CD8-positive, alpha-beta T cell (primary cell): ENCODE measurements at regions of chr3 and their contacts with region 1.

Region 1: GRCh38 chr3:11271986-11272904 is at the start of gene ATG7:
- DNase-seq: peak; percentile 94 to 98 (median 97)
- ATAC-seq: peak; percentile 98
- H3K4me3 ChIP-seq: peak within 1 kb of the TSS; percentile 77 to 96
- H3K4me3 Mint-ChIP-seq: peak within 1 kb of the TSS; percentile 96
- H3K27ac ChIP-seq: peak within 1 kb of the TSS; percentile 94 to 97
- H3K27ac Mint-ChIP-seq: peak within 1 kb of the TSS; percentile 99
- H3K4me1 ChIP-seq: peaks cover 23% of the 10 kb centered on the region
- H3K4me1 Mint-ChIP-seq: peaks cover 52% of the 10 kb centered on the region
- H3K27me3 ChIP-seq: no peaks in the 10 kb centered on the region
- H3K27me3 Mint-ChIP-seq: no peaks in the 10 kb centered on the region
- CTCF ChIP-seq: no peak
- total RNA-seq, gene ATG7: 21.3 to 23.8 TPM

Region 2: DNA sequence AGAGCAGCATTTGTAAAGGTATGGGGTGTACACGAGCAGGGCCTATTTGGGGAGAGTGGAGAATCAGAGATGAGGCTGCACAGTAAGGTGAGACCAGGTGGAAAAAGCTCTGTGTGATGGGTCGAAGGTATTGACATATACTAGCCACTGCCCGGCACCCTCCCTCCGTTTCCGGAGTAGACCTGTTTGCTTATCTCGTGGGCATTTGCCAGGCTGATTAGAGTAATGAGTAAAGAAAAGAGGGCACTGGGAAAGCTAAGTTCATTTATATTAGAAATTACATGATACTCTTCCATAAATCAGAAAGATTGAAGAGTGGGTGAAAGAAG is 46.2 kb before region 1 on chr3:
- CTCF ChIA-PET with region 1: no interaction called
- POLR2A ChIA-PET with region 1: no interaction called
- intact Hi-C with region 1: no loop called
- DNase-seq: no peak
- ATAC-seq: no peak
- H3K4me3 ChIP-seq: no peak overlapping the region
- H3K4me3 Mint-ChIP-seq: no peak overlapping the region
- H3K27ac ChIP-seq: no peak overlapping the region
- H3K27ac Mint-ChIP-seq: no peak overlapping the region
- H3K4me1 ChIP-seq: peaks cover 12% of the 10 kb centered on the region
- H3K4me1 Mint-ChIP-seq: peaks cover 15% of the 10 kb centered on the region
- H3K27me3 ChIP-seq: no peaks in the 10 kb centered on the region
- H3K27me3 Mint-ChIP-seq: no peaks in the 10 kb centered on the region
- CTCF ChIP-seq: no peak

Region 3: GRCh38 chr3:11288786-11289682 is 16.8 kb after region 1 on chr3:
- CTCF ChIA-PET with region 1: interaction called, 7 read pairs
- POLR2A ChIA-PET with region 1: interaction called, 24 read pairs
- intact Hi-C with region 1: loop called in 1 of 2 experiments (anchors 1 kb)
- DNase-seq: peak in 3 of 9 experiments; percentile 15 to 78 (median 65)
- ATAC-seq: peak; percentile 52
- H3K4me3 ChIP-seq: no peak overlapping the region
- H3K4me3 Mint-ChIP-seq: peak overlapping the region; percentile 16
- H3K27ac ChIP-seq: peak overlapping the region; percentile 11 to 89
- H3K27ac Mint-ChIP-seq: peak overlapping the region; percentile 80
- H3K4me1 ChIP-seq: peaks cover 43% of the 10 kb centered on the region
- H3K4me1 Mint-ChIP-seq: peaks cover 59% of the 10 kb centered on the region
- H3K27me3 ChIP-seq: no peaks in the 10 kb centered on the region
- H3K27me3 Mint-ChIP-seq: no peaks in the 10 kb centered on the region
- CTCF ChIP-seq: no peak

Region 4: DNA sequence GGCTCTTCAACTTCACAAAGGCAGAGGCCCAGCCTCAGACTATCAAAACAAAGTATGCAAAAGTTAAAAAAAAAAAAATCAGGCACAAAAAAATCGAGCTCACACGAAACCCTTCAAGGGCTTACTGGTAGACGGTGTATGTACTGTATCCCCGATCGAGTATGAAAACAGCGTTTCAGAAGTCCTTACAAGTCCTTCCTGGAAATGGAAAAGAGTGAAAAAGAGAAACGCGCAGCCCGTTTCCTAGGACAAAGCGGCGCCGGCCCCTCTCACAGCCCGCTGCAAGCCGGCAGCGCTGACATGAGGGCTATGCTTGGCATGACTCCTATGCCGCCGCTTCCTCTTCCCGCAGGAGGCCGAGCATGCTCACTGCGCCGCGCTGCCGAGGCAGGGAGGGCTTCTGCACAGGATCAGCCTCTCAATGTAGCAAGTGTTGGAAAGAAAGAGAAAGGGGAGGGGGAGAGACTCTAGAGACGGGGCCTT is 371.4 kb after region 1 on chr3 and contains the start of gene VGLL4:
- CTCF ChIA-PET with region 1: no interaction called
- POLR2A ChIA-PET with region 1: interaction called, 3 read pairs
- intact Hi-C with region 1: loop called (anchors 2 to 5 kb)
- DNase-seq: peak in 8 of 9 experiments; percentile 55 to 79 (median 66)
- ATAC-seq: peak; percentile 52
- H3K4me3 ChIP-seq: peak within 1 kb of the TSS; percentile 82 to 91
- H3K4me3 Mint-ChIP-seq: peak within 1 kb of the TSS; percentile 99
- H3K27ac ChIP-seq: peak within 1 kb of the TSS; percentile 85 to 95
- H3K27ac Mint-ChIP-seq: peak within 1 kb of the TSS; percentile 99
- H3K4me1 ChIP-seq: peaks cover 19% of the 10 kb centered on the region
- H3K4me1 Mint-ChIP-seq: peaks cover 33% of the 10 kb centered on the region
- H3K27me3 ChIP-seq: no peaks in the 10 kb centered on the region
- H3K27me3 Mint-ChIP-seq: no peaks in the 10 kb centered on the region
- CTCF ChIP-seq: no peak
- total RNA-seq, gene VGLL4: 13.8 to 14.1 TPM

Region 5: GRCh38 chr3:11770477-11771391 is 498.5 kb after region 1 on chr3:
- CTCF ChIA-PET with region 1: no interaction called
- POLR2A ChIA-PET with region 1: no interaction called
- intact Hi-C with region 1: loop called (anchors 5 kb)
- DNase-seq: peak; percentile 59 to 92 (median 74)
- ATAC-seq: peak; percentile 100
- H3K4me3 ChIP-seq: peak overlapping the region; percentile 8 to 14
- H3K4me3 Mint-ChIP-seq: peak overlapping the region; percentile 46
- H3K27ac ChIP-seq: peak overlapping the region; percentile 17 to 20
- H3K27ac Mint-ChIP-seq: peak overlapping the region; percentile 86
- H3K4me1 ChIP-seq: peaks cover 14% of the 10 kb centered on the region
- H3K4me1 Mint-ChIP-seq: peaks cover 19% of the 10 kb centered on the region
- H3K27me3 ChIP-seq: no peaks in the 10 kb centered on the region
- H3K27me3 Mint-ChIP-seq: no peaks in the 10 kb centered on the region
- CTCF ChIP-seq: no peak

Region 6: DNA sequence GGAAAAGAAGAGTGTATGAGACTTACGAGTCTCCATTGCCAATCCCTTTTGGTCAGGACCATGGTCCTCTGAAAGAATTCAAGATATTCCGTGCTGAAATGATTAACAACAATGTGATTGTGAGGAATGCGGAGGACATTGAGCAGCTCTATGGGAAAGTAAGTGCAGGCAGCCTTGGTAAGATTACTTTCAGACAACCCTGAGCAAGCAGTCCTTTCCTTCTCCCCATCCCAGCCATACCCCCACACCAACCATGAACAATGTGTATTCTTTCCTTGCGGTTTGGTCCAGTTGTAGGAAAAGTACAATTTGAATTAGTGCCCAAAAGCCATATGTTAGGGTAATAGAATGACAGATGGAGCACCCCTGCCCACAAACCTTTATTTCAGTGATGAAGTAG is 1217.6 kb after region 1 on chr3:
- CTCF ChIA-PET with region 1: no interaction called
- POLR2A ChIA-PET with region 1: no interaction called
- intact Hi-C with region 1: loop called in 1 of 2 experiments (anchors 5 kb)
- DNase-seq: no peak
- ATAC-seq: no peak
- H3K4me3 ChIP-seq: no peak overlapping the region
- H3K4me3 Mint-ChIP-seq: no peak overlapping the region
- H3K27ac ChIP-seq: no peak overlapping the region
- H3K27ac Mint-ChIP-seq: no peak overlapping the region
- H3K4me1 ChIP-seq: peaks cover 8% of the 10 kb centered on the region
- H3K4me1 Mint-ChIP-seq: peaks cover 22% of the 10 kb centered on the region
- H3K27me3 ChIP-seq: no peaks in the 10 kb centered on the region
- H3K27me3 Mint-ChIP-seq: no peaks in the 10 kb centered on the region
- CTCF ChIP-seq: no peak